ENCODE measurements at regions of chr7 and their contacts with region 1.

Region 1: DNA sequence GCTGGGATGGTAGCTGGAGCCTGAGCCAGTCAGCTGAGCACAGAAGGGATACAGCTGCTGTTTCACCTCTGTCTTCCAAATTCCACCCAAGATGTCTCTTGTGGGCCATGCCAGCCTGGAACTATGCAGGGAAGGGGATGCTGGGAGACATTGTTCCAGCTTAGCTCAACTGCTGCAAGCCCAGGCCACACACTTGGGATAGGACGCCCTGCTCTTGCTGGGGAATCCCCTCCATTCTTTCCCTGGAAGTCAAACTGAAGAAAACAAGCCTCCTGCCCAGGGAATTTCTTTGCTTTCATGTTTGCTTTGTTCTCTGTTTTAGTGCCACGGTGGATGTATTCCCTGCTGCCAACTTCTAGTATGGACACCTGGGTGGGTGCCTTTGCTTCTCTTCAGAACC is 55.2 kb upstream of the CDK13 start:
- DNase-seq: no peak
- ATAC-seq: no peak
- H3K4me3 ChIP-seq: no peak overlapping the region
- H3K27ac ChIP-seq: no peak overlapping the region
- H3K4me1 ChIP-seq: no peaks in the 10 kb centered on the region
- H3K27me3 ChIP-seq: peaks cover 0 to 1% of the 10 kb centered on the region in 2 experiments; a peak in 1 of 4 replicates
- CTCF ChIP-seq: no peak
- EP300 ChIP-seq: no peak
- POLR2A ChIP-seq: no peak
- RAD21 ChIP-seq: no peak

Region 2: GRCh38 chr7:39811161-39811614 is 83.7 kb before region 1 on chr7:
- CTCF ChIA-PET with region 1: no interaction called
- POLR2A ChIA-PET with region 1: no interaction called
- RAD21 ChIA-PET with region 1: no interaction called
- SMC1A ChIA-PET with region 1: no interaction called
- in situ Hi-C with region 1: no loop called
- intact Hi-C with region 1: no loop called
- DNase-seq: no peak
- ATAC-seq: no peak
- H3K4me3 ChIP-seq: no peak overlapping the region
- H3K27ac ChIP-seq: no peak overlapping the region
- H3K4me1 ChIP-seq: no peaks in the 10 kb centered on the region
- H3K27me3 ChIP-seq: no peaks in the 10 kb centered on the region; a peak in 1 of 4 replicates
- CTCF ChIP-seq: no peak
- EP300 ChIP-seq: no peak
- POLR2A ChIP-seq: no peak
- RAD21 ChIP-seq: no peak

Region 3: DNA sequence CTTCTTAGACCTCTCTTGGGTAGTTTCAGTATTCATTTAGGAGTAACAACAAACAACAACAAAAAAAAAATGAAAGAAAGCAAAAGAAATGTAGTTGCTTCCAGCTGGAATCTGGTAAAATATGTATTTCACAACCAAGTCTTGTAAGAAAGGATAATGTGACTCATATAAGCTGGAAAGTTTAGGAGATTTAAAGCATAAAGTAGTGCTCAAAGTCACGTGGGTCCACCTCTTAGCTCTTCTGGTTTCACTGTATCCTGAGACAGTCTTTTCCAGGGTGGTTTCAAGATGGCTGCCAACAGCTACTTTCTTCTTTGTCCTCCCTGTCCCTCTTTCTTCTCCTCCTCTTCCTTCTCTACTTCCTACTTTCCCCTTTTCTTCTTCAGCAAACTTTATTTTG is 14.3 kb before region 1 on chr7:
- CTCF ChIA-PET with region 1: interaction called, 20 read pairs
- POLR2A ChIA-PET with region 1: no interaction called
- RAD21 ChIA-PET with region 1: interaction called, 9 read pairs
- SMC1A ChIA-PET with region 1: no interaction called
- in situ Hi-C with region 1: no loop called
- intact Hi-C with region 1: no loop called
- DNase-seq: no peak
- ATAC-seq: no peak
- H3K4me3 ChIP-seq: no peak overlapping the region
- H3K27ac ChIP-seq: no peak overlapping the region
- H3K4me1 ChIP-seq: no peaks in the 10 kb centered on the region
- H3K27me3 ChIP-seq: no peaks in the 10 kb centered on the region
- CTCF ChIP-seq: no peak
- EP300 ChIP-seq: no peak
- POLR2A ChIP-seq: no peak
- RAD21 ChIP-seq: no peak

Region 4: GRCh38 chr7:39958038-39958437 is 63.1 kb after region 1 on chr7:
- CTCF ChIA-PET with region 1: interaction called, 8 read pairs
- POLR2A ChIA-PET with region 1: no interaction called
- RAD21 ChIA-PET with region 1: interaction called, 7 read pairs
- SMC1A ChIA-PET with region 1: interaction called, 12 read pairs
- in situ Hi-C with region 1: no loop called
- intact Hi-C with region 1: no loop called
- DNase-seq: no peak
- ATAC-seq: peak; percentile 53
- H3K4me3 ChIP-seq: peak overlapping the region; percentile 49
- H3K27ac ChIP-seq: no peak overlapping the region
- H3K4me1 ChIP-seq: peaks cover 5% of the 10 kb centered on the region; the same call in 1 of the 2 replicates
- H3K27me3 ChIP-seq: no peaks in the 10 kb centered on the region
- CTCF ChIP-seq: no peak
- EP300 ChIP-seq: 0 out of 4 replicates have a peak, but pooled peaks of 1 of the 2 experiments have one; percentile 28
- POLR2A ChIP-seq: no peak
- RAD21 ChIP-seq: no peak

Region 5: GRCh38 chr7:40047661-40048060 is 152.8 kb after region 1 on chr7:
- CTCF ChIA-PET with region 1: interaction called, 155 read pairs
- POLR2A ChIA-PET with region 1: no interaction called
- RAD21 ChIA-PET with region 1: interaction called, 59 read pairs
- SMC1A ChIA-PET with region 1: interaction called, 87 read pairs
- in situ Hi-C with region 1: loop called (anchors 5 kb)
- intact Hi-C with region 1: loop called (anchors 1 kb)
- DNase-seq: no peak
- ATAC-seq: no peak
- H3K4me3 ChIP-seq: no peak overlapping the region
- H3K27ac ChIP-seq: no peak overlapping the region
- H3K4me1 ChIP-seq: no peaks in the 10 kb centered on the region
- H3K27me3 ChIP-seq: no peaks in the 10 kb centered on the region
- CTCF ChIP-seq: no peak
- EP300 ChIP-seq: no peak
- POLR2A ChIP-seq: no peak
- RAD21 ChIP-seq: 0 out of 2 replicates have a peak, but pooled peaks have one; percentile 4

Region 6: GRCh38 chr7:40057292-40057691 is 162.4 kb after region 1 on chr7:
- CTCF ChIA-PET with region 1: interaction called, 155 read pairs
- POLR2A ChIA-PET with region 1: no interaction called
- RAD21 ChIA-PET with region 1: interaction called, 59 read pairs
- SMC1A ChIA-PET with region 1: interaction called, 87 read pairs
- in situ Hi-C with region 1: loop called (anchors 5 kb)
- intact Hi-C with region 1: loop called (anchors 1 kb)
- DNase-seq: no peak
- ATAC-seq: no peak
- H3K4me3 ChIP-seq: no peak overlapping the region
- H3K27ac ChIP-seq: no peak overlapping the region
- H3K4me1 ChIP-seq: no peaks in the 10 kb centered on the region
- H3K27me3 ChIP-seq: no peaks in the 10 kb centered on the region
- CTCF ChIP-seq: no peak
- EP300 ChIP-seq: no peak
- POLR2A ChIP-seq: no peak
- RAD21 ChIP-seq: no peak

Region 7: DNA sequence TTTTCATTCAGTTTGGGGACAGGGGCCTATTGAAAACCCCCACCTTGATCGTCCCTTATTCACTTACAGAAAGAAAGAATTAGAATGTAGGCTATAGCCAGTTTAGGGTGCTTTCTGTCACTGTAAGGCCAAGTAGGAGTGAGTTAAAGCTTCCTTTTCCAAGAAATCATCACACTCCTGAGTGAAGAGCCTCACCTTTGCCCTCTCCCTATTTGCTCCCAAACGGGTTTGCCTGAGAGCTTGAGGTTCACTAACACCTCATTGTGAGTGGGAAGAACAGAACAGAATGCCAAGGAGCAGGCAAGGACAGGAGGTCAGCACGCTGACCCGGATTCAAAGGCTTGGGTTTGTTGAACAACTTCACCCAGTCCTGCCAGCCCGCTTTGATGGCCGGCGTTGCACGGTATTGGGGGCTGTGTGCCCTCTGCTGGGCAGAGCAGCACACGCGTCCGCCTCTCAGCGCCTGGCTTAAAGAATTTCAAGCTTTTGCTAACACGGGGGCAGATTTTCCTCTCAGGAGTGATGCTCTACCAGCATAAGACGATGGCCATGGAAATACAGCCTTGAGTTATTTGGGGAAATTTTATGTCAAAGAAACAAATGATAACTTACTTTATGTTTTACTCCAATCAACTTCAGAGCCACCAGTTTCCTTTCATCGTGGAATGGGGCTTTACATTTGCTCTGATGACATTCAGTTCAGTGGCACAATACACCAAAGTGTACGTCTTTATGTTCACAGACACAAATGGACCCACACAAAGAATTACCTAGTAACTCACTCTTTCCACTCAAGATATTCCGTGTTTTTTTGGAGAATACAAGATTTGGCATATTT is 709.9 kb after region 1 on chr7:
- CTCF ChIA-PET with region 1: interaction called, 52 read pairs
- POLR2A ChIA-PET with region 1: no interaction called
- RAD21 ChIA-PET with region 1: no interaction called
- SMC1A ChIA-PET with region 1: interaction called, 9 read pairs
- in situ Hi-C with region 1: no loop called
- intact Hi-C with region 1: loop called (anchors 2 kb)
- DNase-seq: no peak
- ATAC-seq: peak; percentile 99
- H3K4me3 ChIP-seq: no peak overlapping the region
- H3K27ac ChIP-seq: no peak overlapping the region
- H3K4me1 ChIP-seq: no peaks in the 10 kb centered on the region
- H3K27me3 ChIP-seq: no peaks in the 10 kb centered on the region
- CTCF ChIP-seq: peak; percentile 62 to 77 (median 74)
- EP300 ChIP-seq: no peak
- POLR2A ChIP-seq: no peak
- RAD21 ChIP-seq: peak; percentile 63